GM10248 (cell line): ENCODE measurements at regions of chr12 and their contacts with region 1.

Region 1: DNA sequence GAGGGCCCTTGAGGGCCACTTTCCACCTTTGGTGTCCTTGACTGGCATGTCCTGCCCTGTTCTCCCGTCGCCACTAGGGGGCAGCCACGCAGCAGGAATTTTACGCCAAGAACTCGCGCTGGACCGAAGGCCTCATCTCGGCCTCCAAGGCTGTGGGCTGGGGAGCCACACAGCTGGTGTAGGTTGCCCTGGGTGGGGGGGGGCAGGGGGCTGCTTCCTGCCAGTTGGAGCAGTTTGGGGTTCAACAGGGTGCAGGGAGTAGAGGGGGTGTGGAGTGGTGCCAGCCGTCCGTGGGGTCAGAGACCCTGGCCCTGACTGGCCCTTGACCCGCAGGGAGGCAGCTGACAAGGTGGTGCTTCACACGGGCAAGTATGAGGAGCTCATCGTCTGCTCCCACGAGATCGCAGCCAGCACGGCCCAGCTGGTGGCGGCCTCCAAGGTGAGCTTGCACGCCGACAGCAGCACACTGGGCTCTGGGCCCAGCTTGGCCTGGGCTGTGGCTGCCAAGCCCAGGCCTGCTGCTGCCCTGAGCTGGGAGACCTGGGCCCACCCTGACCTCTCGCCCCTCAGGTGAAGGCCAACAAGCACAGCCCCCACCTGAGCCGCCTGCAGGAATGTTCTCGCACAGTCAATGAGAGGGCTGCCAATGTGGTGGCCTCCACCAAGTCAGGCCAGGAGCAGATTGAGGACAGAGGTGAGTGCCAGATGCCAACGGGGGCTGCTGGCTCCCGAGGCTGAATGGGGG is 25.3 kb downstream of the HIP1R start:
- DNase-seq: peak; percentile 88
- CTCF ChIP-seq: peak; percentile 97

Region 2: GRCh38 chr12:122871851-122872780 is 11.6 kb after region 1 on chr12:
- CTCF ChIA-PET with region 1: interaction called, 62 read pairs
- POLR2A ChIA-PET with region 1: interaction called, 3 read pairs
- DNase-seq: peak; percentile 64
- CTCF ChIP-seq: no peak

Region 3: GRCh38 chr12:122895705-122896636 is 35.5 kb after region 1 on chr12 and contains the start of gene VPS37B:
- CTCF ChIA-PET with region 1: interaction called, 13 read pairs
- POLR2A ChIA-PET with region 1: no interaction called
- DNase-seq: peak; percentile 92
- CTCF ChIP-seq: no peak

Region 4: DNA sequence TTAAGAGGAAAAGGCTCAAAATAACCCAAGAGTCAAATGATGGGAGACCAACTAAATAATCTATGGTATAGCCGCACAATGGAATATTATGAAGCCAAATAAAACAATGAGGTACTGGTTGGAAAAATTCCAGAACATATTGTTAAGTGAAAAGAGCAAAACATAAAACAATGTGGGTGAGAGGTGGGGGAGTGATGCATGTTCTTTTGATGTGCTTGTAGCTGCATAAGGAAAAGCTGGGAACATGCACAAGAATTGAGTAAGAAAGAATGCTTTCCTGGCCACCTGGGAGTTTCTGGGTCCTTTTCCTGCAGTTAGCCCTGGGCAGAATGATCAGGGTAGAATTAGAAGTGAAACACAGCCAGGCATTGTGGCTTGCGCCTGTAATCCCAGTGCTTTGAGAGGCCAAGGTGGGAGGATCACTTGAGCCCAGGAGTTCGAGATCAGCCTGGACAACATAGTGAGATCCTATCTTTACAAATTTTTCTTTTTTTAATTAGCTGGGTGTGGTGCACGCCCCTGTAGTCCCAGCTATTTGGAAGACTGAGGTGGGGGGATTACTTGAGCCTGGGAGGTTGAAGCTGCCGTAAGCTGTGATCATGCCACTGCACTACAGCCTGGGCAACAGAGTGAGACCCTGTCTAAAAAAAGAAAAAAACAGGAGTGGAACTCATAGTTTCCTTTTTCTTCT is 97.8 kb after region 1 on chr12:
- CTCF ChIA-PET with region 1: interaction called, 158 read pairs
- POLR2A ChIA-PET with region 1: no interaction called
- DNase-seq: no peak
- CTCF ChIP-seq: no peak

Region 5: GRCh38 chr12:123097561-123098084 is 237.1 kb after region 1 on chr12:
- CTCF ChIA-PET with region 1: no interaction called
- POLR2A ChIA-PET with region 1: no interaction called
- DNase-seq: no peak
- CTCF ChIP-seq: no peak